ENCODE measurements at regions of chr13 and their contacts with region 1.

Region 1: DNA sequence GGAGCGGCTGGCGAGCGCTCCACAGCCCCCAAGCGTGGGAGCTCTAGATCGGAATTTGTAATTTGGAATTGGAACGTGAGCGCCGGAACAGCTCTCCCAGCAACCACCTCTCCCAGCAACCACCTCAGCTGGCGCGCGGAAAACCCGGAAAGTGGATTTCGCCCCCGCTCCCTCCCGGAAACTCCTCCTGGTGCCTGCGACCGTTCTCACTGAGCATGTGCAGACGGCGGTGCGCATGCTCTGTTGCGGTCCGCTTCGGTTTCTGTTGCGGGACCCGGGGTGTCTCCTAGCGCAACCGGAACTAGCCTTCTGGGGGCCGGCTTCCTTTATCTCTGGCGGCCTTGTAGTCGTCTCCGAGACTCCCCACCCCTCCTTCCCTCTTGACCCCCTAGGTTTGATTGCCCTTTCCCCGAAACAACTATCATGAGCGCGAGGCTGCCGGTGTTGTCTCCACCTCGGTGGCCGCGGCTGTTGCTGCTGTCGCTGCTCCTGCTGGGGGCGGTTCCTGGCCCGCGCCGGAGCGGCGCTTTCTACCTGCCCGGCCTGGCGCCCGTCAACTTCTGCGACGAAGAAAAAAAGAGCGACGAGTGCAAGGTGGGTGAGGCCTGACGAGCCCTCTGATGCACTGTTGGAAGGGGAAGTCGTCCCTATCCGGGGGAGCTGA is at the start of gene TM9SF2:
- DNase-seq: peak; percentile 93 to 99 (median 96)
- ATAC-seq: peak; percentile 60
- H3K4me3 ChIP-seq: peak within 1 kb of the TSS; percentile 85
- H3K4me3 Mint-ChIP-seq: peak within 1 kb of the TSS; percentile 96
- H3K27ac ChIP-seq: peak within 1 kb of the TSS; percentile 85 to 92
- H3K27ac Mint-ChIP-seq: peak within 1 kb of the TSS; percentile 98
- H3K4me1 ChIP-seq: peaks cover 56% of the 10 kb centered on the region
- H3K4me1 Mint-ChIP-seq: peaks cover 90% of the 10 kb centered on the region
- H3K27me3 ChIP-seq: no peaks in the 10 kb centered on the region
- H3K27me3 Mint-ChIP-seq: no peaks in the 10 kb centered on the region
- CTCF ChIP-seq: no peak
- total RNA-seq, gene TM9SF2: 37.2 to 38.2 TPM

Region 2: GRCh38 chr13:97849305-97849704 is 1652.0 kb before region 1 on chr13:
- CTCF ChIA-PET with region 1: no interaction called
- POLR2A ChIA-PET with region 1: no interaction called
- intact Hi-C with region 1: no loop called
- DNase-seq: peak in 2 of 14 experiments; percentile 8
- ATAC-seq: no peak
- H3K4me3 ChIP-seq: no peak overlapping the region
- H3K4me3 Mint-ChIP-seq: no peak overlapping the region
- H3K27ac ChIP-seq: no peak overlapping the region
- H3K27ac Mint-ChIP-seq: no peak overlapping the region
- H3K4me1 ChIP-seq: no peaks in the 10 kb centered on the region
- H3K4me1 Mint-ChIP-seq: no peaks in the 10 kb centered on the region
- H3K27me3 ChIP-seq: peaks cover 5 to 12% of the 10 kb centered on the region in 2 experiments
- H3K27me3 Mint-ChIP-seq: peaks cover 37% of the 10 kb centered on the region
- CTCF ChIP-seq: no peak

Region 3: GRCh38 chr13:99176309-99177276 is 324.7 kb before region 1 on chr13:
- CTCF ChIA-PET with region 1: interaction called, 4 read pairs
- POLR2A ChIA-PET with region 1: no interaction called
- intact Hi-C with region 1: loop called in 1 of 2 experiments (anchors 5 kb)
- DNase-seq: peak; percentile 64 to 89 (median 74)
- ATAC-seq: peak; percentile 93
- H3K4me3 ChIP-seq: peak overlapping the region; percentile 16
- H3K4me3 Mint-ChIP-seq: peak overlapping the region; percentile 42
- H3K27ac ChIP-seq: no peak overlapping the region
- H3K27ac Mint-ChIP-seq: peak overlapping the region; percentile 76
- H3K4me1 ChIP-seq: peaks cover 41% of the 10 kb centered on the region
- H3K4me1 Mint-ChIP-seq: peaks cover 40% of the 10 kb centered on the region
- H3K27me3 ChIP-seq: no peaks in the 10 kb centered on the region
- H3K27me3 Mint-ChIP-seq: no peaks in the 10 kb centered on the region
- CTCF ChIP-seq: peak; percentile 94

Region 4: GRCh38 chr13:99296398-99296797 is 204.9 kb before region 1 on chr13:
- CTCF ChIA-PET with region 1: interaction called, 3 read pairs
- POLR2A ChIA-PET with region 1: no interaction called
- intact Hi-C with region 1: loop called in 1 of 2 experiments (anchors 10 kb)
- DNase-seq: peak in 3 of 14 experiments; percentile 63 to 74 (median 68)
- ATAC-seq: peak; percentile 60
- H3K4me3 ChIP-seq: peak overlapping the region; percentile 28
- H3K4me3 Mint-ChIP-seq: peak overlapping the region; percentile 86
- H3K27ac ChIP-seq: peak overlapping the region; percentile 39 to 78
- H3K27ac Mint-ChIP-seq: peak overlapping the region; percentile 100
- H3K4me1 ChIP-seq: peaks cover 43% of the 10 kb centered on the region
- H3K4me1 Mint-ChIP-seq: peaks cover 93% of the 10 kb centered on the region
- H3K27me3 ChIP-seq: no peaks in the 10 kb centered on the region
- H3K27me3 Mint-ChIP-seq: no peaks in the 10 kb centered on the region
- CTCF ChIP-seq: no peak

Region 5: GRCh38 chr13:99442273-99442895 is 58.9 kb before region 1 on chr13:
- CTCF ChIA-PET with region 1: interaction called, 13 read pairs
- POLR2A ChIA-PET with region 1: interaction called, 3 read pairs
- intact Hi-C with region 1: loop called (anchors 1 kb)
- DNase-seq: peak in 10 of 14 experiments; percentile 41 to 82 (median 49)
- ATAC-seq: peak; percentile 80
- H3K4me3 ChIP-seq: no peak overlapping the region
- H3K4me3 Mint-ChIP-seq: no peak overlapping the region
- H3K27ac ChIP-seq: no peak overlapping the region
- H3K27ac Mint-ChIP-seq: no peak overlapping the region
- H3K4me1 ChIP-seq: peaks cover 2% of the 10 kb centered on the region
- H3K4me1 Mint-ChIP-seq: peaks cover 15% of the 10 kb centered on the region
- H3K27me3 ChIP-seq: no peaks in the 10 kb centered on the region
- H3K27me3 Mint-ChIP-seq: no peaks in the 10 kb centered on the region
- CTCF ChIP-seq: peak; percentile 100

Region 6: GRCh38 chr13:99995589-99996380 is 494.5 kb after region 1 on chr13:
- CTCF ChIA-PET with region 1: no interaction called
- POLR2A ChIA-PET with region 1: no interaction called
- intact Hi-C with region 1: loop called in 1 of 2 experiments (anchors 10 kb)
- DNase-seq: peak in 1 of 14 experiments; percentile 33
- ATAC-seq: no peak
- H3K4me3 ChIP-seq: no peak overlapping the region
- H3K4me3 Mint-ChIP-seq: no peak overlapping the region
- H3K27ac ChIP-seq: no peak overlapping the region
- H3K27ac Mint-ChIP-seq: no peak overlapping the region
- H3K4me1 ChIP-seq: peaks cover 27% of the 10 kb centered on the region
- H3K4me1 Mint-ChIP-seq: peaks cover 11% of the 10 kb centered on the region
- H3K27me3 ChIP-seq: peaks cover 77 to 93% of the 10 kb centered on the region in 2 experiments
- H3K27me3 Mint-ChIP-seq: peaks cover 90% of the 10 kb centered on the region
- CTCF ChIP-seq: no peak

Region 7: DNA sequence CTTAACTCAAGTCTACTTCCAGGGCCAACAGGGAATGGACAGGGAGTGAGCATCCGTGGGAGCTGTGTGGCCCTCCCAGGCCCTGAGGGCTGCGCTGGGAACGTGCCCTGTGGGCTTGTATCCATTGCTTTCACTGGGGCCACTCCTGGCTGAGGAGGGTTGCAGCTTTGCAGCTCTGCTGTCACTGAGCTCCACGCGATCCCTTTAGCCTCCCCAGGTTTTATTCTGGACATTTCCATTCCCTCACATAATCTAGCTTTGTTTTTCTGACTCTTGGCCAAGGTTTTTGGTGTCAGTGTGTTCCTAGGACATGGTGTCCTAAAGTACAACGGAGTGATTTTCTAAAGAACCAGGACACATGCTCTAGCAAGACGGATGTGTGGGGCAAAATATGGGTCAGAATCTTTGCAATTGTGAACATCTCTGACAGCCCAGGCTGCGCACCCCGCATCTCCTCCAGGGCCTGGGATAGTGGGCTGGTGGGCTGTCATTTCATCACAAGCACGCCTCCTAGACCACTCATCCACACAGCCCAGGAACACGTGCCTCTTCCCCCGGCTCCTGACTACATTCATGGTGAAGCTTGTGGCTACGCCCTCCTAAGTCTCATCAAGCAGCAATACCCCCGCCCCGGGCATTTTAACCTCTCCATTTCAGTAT is 1059.3 kb after region 1 on chr13:
- CTCF ChIA-PET with region 1: no interaction called
- POLR2A ChIA-PET with region 1: no interaction called
- intact Hi-C with region 1: no loop called
- DNase-seq: no peak
- ATAC-seq: no peak
- H3K4me3 ChIP-seq: no peak overlapping the region
- H3K4me3 Mint-ChIP-seq: no peak overlapping the region
- H3K27ac ChIP-seq: no peak overlapping the region
- H3K27ac Mint-ChIP-seq: no peak overlapping the region
- H3K4me1 ChIP-seq: no peaks in the 10 kb centered on the region
- H3K4me1 Mint-ChIP-seq: no peaks in the 10 kb centered on the region
- H3K27me3 ChIP-seq: no peaks in the 10 kb centered on the region
- H3K27me3 Mint-ChIP-seq: no peaks in the 10 kb centered on the region
- CTCF ChIP-seq: no peak

Measured in CD4-positive, alpha-beta T cell (primary cell).